ENCODE measurements at regions of chr17 and their contacts with region 1.

Region 1: DNA sequence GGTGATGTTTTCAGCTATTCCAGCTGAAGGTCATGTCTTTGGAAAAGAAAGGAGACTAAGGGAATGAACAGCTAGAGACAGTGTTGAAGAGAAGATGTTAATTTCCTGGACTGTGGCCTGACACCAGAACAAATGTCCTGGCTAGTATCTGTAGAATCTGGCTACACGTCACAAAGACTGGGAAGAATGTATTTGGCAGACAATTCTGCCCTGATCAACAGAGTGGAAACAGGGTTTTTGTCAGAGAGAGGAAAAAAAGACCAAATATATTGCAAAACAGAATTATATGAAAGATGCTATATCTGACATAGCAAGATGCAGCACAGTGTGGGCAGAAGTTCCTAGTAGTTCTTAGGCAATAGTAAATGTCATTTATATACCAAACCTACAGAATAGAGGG is 17.0 kb upstream of the ANKFN1 start:
- DNase-seq: no peak
- ATAC-seq: no peak
- H3K4me3 ChIP-seq: no peak overlapping the region
- H3K27ac ChIP-seq: no peak overlapping the region
- H3K4me1 ChIP-seq: no peaks in the 10 kb centered on the region
- H3K27me3 ChIP-seq: peaks cover 44% of the 10 kb centered on the region
- CTCF ChIP-seq: no peak
- POLR2A ChIP-seq: no peak
- RAD21 ChIP-seq: no peak

Region 2: GRCh38 chr17:55641676-55642081 is 494.6 kb before region 1 on chr17:
- CTCF ChIA-PET with region 1: no interaction called
- POLR2A ChIA-PET with region 1: no interaction called
- RAD21 ChIA-PET with region 1: no interaction called
- intact Hi-C with region 1: loop called (anchors 10 kb)
- DNase-seq: peak; percentile 57
- ATAC-seq: peak; percentile 93
- H3K4me3 ChIP-seq: no peak overlapping the region
- H3K27ac ChIP-seq: no peak overlapping the region
- H3K4me1 ChIP-seq: no peaks in the 10 kb centered on the region
- H3K27me3 ChIP-seq: peaks cover 56% of the 10 kb centered on the region
- CTCF ChIP-seq: peak; percentile 36 to 86 (median 71); a peak in 5 of 6 replicates
- POLR2A ChIP-seq: no peak
- RAD21 ChIP-seq: peak; percentile 47

Measured in HCT116 (cell line).